B cell (primary cell): ENCODE measurements at regions of chr11 and their contacts with region 1.

Region 1: DNA sequence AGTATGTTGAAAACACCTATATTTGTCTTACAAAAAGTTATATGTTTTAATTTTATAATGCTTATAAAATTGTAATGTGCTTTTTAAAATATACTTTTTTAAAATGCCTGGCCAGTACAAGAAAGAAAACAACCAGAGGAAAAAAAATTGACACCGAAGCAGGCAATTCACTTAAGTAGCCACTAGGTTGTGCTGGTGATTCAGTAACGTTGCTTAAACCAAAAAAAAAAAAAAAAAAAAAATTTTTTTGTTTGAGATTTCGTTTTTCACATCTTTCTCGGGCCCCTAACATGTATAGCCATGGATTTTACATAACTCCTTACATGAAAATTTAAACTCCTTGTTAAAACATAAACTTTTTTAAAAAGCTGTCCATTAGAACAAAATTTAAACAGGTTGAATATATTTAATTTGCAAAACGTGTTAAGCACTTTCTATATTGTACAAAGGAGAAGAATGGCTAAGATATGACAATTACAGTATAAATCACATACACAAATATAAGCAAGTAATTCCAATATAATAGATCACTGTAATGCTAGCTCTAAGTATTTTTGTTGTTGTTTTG is 9.2 kb downstream of the OR8B4 start:
- DNase-seq: peak; percentile 34
- ATAC-seq: no peak
- H3K4me3 ChIP-seq: no peak overlapping the region
- H3K4me3 Mint-ChIP-seq: no peak overlapping the region
- H3K27ac ChIP-seq: no peak overlapping the region
- H3K27ac Mint-ChIP-seq: no peak overlapping the region
- H3K4me1 ChIP-seq: no peaks in the 10 kb centered on the region
- H3K4me1 Mint-ChIP-seq: no peaks in the 10 kb centered on the region
- H3K27me3 ChIP-seq: peaks cover 0 to 8% (median 2%) of the 10 kb centered on the region in 4 experiments
- H3K27me3 Mint-ChIP-seq: peaks cover 16% of the 10 kb centered on the region
- CTCF ChIP-seq: peak; percentile 68

Region 2: GRCh38 chr11:124837491-124837856 is 422.0 kb after region 1 on chr11:
- CTCF ChIA-PET with region 1: interaction called, 3 read pairs
- POLR2A ChIA-PET with region 1: no interaction called
- intact Hi-C with region 1: loop called (anchors 5 kb)
- DNase-seq: peak; percentile 43
- ATAC-seq: no peak
- H3K4me3 ChIP-seq: no peak overlapping the region
- H3K4me3 Mint-ChIP-seq: no peak overlapping the region
- H3K27ac ChIP-seq: no peak overlapping the region
- H3K27ac Mint-ChIP-seq: no peak overlapping the region
- H3K4me1 ChIP-seq: peaks cover 24 to 30% of the 10 kb centered on the region in 2 donors
- H3K4me1 Mint-ChIP-seq: peaks cover 18% of the 10 kb centered on the region
- H3K27me3 ChIP-seq: peaks cover 0 to 53% (median 42%) of the 10 kb centered on the region in 4 experiments
- H3K27me3 Mint-ChIP-seq: peaks cover 62% of the 10 kb centered on the region
- CTCF ChIP-seq: no peak